Naive thymus-derived CD4-positive, alpha-beta T cell (primary cell): ENCODE measurements at regions of chr19 and their contacts with region 1.

Region 1: DNA sequence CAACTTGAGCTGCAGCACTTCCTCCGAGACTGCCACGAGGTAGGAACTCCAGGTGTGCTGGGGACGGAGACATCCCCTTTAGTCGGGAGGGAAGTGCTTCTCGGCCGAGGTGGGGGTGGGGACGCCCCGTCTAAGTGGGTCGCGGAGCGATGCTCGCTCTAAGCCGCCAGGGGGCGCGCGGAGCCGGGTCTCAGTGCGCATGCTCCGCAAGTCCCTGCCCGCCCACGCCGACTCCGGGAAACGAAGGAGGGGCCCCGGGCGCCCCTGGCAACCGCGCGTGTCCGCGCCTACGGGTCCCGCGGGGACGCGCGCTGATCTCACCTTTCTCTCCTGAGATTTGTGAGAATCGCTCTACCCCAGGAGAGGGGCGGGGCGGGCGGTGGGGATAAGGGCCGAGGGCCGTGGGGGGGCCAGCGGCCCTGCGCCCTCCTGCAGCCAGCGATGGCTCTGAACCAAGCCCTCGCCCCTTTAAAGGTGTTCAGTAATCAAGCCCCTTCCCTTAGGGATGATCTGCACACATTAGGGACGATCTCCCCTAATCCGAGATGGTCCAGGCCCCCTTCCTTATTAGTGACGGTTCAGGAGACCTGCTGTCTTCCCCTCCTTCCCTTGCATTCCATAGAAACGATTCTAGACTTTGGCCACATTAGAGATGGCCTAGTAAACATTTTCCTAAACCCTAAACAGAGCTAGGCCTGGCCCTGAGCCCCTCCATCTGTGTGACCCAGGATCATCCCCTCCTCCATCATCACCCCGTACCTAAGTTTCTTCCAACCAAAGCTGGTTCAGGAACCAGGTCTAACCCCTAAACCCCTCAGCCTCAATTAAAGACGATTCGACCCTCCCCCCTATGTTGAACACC is 47.3 kb upstream of the SHKBP1 start:
- DNase-seq: peak; percentile 84 to 97 (median 89)
- ATAC-seq: peak; percentile 97
- H3K4me3 ChIP-seq: peak overlapping the region; percentile 72
- H3K4me3 Mint-ChIP-seq: peak overlapping the region; percentile 66 to 87 (median 81)
- H3K27ac ChIP-seq: no peak overlapping the region
- H3K27ac Mint-ChIP-seq: peak overlapping the region in 6 of 9 donors; percentile 36 to 90 (median 60)
- H3K4me1 ChIP-seq: peaks cover 9 to 16% of the 10 kb centered on the region in 2 donors
- H3K4me1 Mint-ChIP-seq: peaks cover 5 to 25% (median 12%) of the 10 kb centered on the region in 7 donors
- H3K27me3 ChIP-seq: peaks cover 0 to 3% of the 10 kb centered on the region in 2 donors
- H3K27me3 Mint-ChIP-seq: peaks cover 13 to 37% (median 24%) of the 10 kb centered on the region in 5 donors

Region 2: DNA sequence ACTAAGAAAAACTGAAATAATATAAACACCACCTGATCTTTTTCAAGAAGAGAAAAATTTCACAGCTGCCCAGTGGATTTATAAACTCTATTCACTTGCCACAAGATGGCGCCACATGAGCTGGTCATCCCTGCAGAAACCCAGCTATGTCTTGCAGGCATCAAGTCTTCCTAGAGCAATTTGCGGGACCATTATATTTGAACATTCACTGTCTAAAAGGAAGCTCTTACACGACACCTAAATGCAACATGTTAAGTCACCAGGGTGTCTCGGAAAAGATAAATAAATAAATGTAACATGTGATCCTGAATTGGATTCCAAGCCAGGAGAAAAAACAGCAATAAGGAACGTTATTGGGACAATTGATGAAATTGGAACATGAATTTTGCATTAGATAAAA is 223.9 kb before region 1 on chr19:
- CTCF ChIA-PET with region 1: no interaction called
- POLR2A ChIA-PET with region 1: no interaction called
- intact Hi-C with region 1: loop called in 1 of 2 experiments (anchors 10 kb)
- DNase-seq: peak; percentile 39 to 75 (median 63)
- ATAC-seq: peak; percentile 80
- H3K4me3 ChIP-seq: no peak overlapping the region
- H3K4me3 Mint-ChIP-seq: no peak overlapping the region
- H3K27ac ChIP-seq: no peak overlapping the region
- H3K27ac Mint-ChIP-seq: no peak overlapping the region
- H3K4me1 ChIP-seq: no peaks in the 10 kb centered on the region
- H3K4me1 Mint-ChIP-seq: peaks cover 0 to 5% (median 4%) of the 10 kb centered on the region in 7 donors
- H3K27me3 ChIP-seq: no peaks in the 10 kb centered on the region
- H3K27me3 Mint-ChIP-seq: no peaks in the 10 kb centered on the region

Region 3: DNA sequence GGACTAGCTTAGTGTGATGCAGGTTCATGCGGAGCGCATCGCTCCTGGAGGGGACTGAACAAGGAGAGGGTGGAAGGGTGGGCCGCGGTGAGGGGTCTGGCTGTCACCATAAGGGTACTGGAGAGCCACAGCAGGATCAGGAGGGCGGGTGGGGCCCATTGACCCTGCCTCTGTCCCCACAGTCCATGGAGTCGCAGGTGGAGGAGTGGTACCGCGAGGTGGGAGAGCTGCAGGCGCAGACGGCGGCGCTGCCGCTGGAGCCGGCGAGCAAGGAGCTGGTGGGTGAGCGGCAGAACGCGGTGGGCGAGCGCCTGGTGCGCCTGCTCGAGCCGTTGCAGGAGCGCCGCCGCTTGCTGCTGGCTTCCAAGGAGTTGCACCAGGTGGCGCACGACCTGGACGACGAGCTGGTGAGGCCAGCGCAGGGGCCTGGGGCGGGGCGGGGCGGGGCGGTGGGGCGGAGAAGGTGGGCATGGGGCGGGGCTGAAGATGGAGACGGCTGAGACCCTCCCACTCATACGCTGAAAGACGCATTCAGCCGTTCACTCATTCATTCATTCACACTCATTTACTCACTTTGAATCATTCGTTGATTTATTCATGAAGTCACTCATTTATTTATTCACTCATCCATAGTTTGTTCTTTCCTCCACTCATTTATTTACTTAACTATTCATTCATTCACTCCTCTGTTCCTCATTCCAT is 19.8 kb after region 1 on chr19:
- CTCF ChIA-PET with region 1: interaction called, 3 read pairs
- POLR2A ChIA-PET with region 1: no interaction called
- intact Hi-C with region 1: loop called in 1 of 2 experiments (anchors 2 kb)
- DNase-seq: peak; percentile 26 to 74 (median 57)
- ATAC-seq: peak; percentile 95
- H3K4me3 ChIP-seq: no peak overlapping the region
- H3K4me3 Mint-ChIP-seq: peak overlapping the region in 8 of 10 donors; percentile 13 to 73 (median 54)
- H3K27ac ChIP-seq: no peak overlapping the region
- H3K27ac Mint-ChIP-seq: no peak overlapping the region
- H3K4me1 ChIP-seq: peaks cover 0 to 5% of the 10 kb centered on the region in 2 donors
- H3K4me1 Mint-ChIP-seq: peaks cover 0 to 14% (median 12%) of the 10 kb centered on the region in 7 donors
- H3K27me3 ChIP-seq: peaks cover 0 to 10% of the 10 kb centered on the region in 2 donors
- H3K27me3 Mint-ChIP-seq: peaks cover 38 to 60% (median 52%) of the 10 kb centered on the region in 5 donors

Region 4: DNA sequence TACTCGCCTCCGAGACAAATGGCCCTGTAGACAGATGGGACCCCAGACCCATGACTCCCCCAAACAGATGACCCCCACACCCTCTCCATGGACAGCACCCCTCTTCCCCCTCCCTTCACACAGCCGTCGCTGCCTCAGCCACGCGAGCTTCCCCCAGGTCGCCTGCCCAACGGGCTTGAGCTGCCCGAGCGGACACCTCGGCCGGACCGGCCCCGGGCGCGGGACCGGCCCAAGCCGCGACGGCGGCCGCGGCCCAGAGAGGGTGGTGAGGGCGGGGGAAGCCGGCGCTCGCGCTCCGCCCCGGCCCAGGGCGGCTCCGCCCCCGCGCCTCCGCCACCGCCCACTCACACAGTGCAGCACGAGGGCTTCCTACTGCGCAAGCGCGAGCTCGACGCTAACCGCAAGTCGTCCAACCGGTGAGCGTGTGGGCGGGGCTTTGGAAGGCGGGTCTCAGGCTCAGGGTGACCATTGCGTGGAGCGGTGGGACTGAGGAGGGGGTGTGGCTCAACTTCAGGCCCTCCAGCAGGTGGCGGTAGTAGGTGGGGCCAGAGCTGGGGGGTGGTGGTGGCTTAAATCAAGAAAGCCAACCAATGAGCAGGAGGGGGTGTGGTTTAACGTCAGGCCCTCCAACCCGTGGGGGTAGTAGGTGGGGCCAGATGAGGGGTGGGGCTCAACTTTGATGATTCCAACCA is 41.1 kb after region 1 on chr19:
- CTCF ChIA-PET with region 1: no interaction called
- POLR2A ChIA-PET with region 1: interaction called, 4 read pairs
- intact Hi-C with region 1: loop called in 1 of 2 experiments (anchors 1 kb)
- DNase-seq: peak; percentile 90 to 97 (median 96)
- ATAC-seq: peak; percentile 94
- H3K4me3 ChIP-seq: peak overlapping the region; percentile 45
- H3K4me3 Mint-ChIP-seq: peak overlapping the region; percentile 50 to 85 (median 82)
- H3K27ac ChIP-seq: no peak overlapping the region
- H3K27ac Mint-ChIP-seq: peak overlapping the region; percentile 55 to 93 (median 81)
- H3K4me1 ChIP-seq: peaks cover 9 to 13% of the 10 kb centered on the region in 2 donors
- H3K4me1 Mint-ChIP-seq: peaks cover 10 to 27% (median 19%) of the 10 kb centered on the region in 7 donors
- H3K27me3 ChIP-seq: no peaks in the 10 kb centered on the region
- H3K27me3 Mint-ChIP-seq: peaks cover 9 to 41% (median 17%) of the 10 kb centered on the region in 5 donors

Region 5: DNA sequence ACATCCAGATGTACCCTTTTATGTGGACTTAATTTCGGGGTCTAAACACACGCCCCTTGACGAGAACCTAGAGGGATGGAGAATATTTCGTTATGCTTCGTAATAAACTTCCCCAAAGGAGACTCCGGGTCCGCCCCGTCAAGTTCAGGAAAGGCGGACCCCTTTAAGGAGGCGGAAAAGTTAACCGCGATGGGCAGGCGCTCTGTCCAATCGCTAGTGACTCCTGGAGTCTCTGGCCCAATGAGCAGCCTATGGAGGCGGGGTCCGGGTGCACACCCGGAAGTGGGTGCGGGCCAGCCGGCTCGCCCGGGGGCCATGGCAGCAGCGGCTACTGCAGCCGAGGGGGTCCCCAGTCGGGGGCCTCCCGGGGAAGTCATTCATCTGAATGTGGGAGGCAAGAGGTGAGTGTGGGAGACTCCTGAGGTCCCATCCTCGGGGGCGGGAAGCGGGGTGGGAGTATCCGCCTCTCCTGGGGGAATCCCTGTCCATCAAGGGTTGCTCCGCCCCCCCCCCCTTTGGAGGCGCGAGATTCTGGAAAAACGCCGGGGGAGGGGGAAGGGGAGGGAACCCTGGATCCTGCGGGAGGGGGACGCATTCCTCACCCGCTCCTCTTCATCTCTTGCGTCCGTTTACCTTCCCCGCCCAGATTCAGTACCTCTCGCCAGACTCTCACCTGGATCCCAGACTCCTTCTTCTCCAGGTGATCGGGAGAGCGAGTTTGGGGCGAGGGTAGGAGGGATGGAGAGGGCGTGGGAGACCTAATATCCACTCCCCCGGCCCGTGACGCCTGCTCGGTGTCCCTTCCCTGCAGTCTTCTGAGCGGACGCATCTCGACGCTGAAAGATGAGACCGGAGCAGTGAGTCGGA is 47.5 kb after region 1 on chr19 and contains the start of gene SHKBP1:
- CTCF ChIA-PET with region 1: no interaction called
- POLR2A ChIA-PET with region 1: no interaction called
- intact Hi-C with region 1: loop called in 1 of 2 experiments (anchors 2 kb)
- DNase-seq: peak; percentile 84 to 93 (median 92)
- ATAC-seq: peak; percentile 97
- H3K4me3 ChIP-seq: peak within 1 kb of the TSS; percentile 84
- H3K4me3 Mint-ChIP-seq: peak within 1 kb of the TSS; percentile 80 to 96 (median 90)
- H3K27ac ChIP-seq: peak within 1 kb of the TSS; percentile 77
- H3K27ac Mint-ChIP-seq: peak within 1 kb of the TSS; percentile 79 to 96 (median 87)
- H3K4me1 ChIP-seq: peaks cover 14 to 22% of the 10 kb centered on the region in 2 donors
- H3K4me1 Mint-ChIP-seq: peaks cover 16 to 26% (median 20%) of the 10 kb centered on the region in 7 donors
- H3K27me3 ChIP-seq: no peaks in the 10 kb centered on the region
- H3K27me3 Mint-ChIP-seq: no peaks in the 10 kb centered on the region
- total RNA-seq, gene SHKBP1: 98.4 to 218 (median 139) TPM

Region 6: GRCh38 chr19:40633207-40633606 is 103.9 kb after region 1 on chr19:
- CTCF ChIA-PET with region 1: interaction called, 8 read pairs
- POLR2A ChIA-PET with region 1: no interaction called
- intact Hi-C with region 1: loop called in 1 of 2 experiments (anchors 1 kb)
- DNase-seq: no peak
- ATAC-seq: no peak
- H3K4me3 ChIP-seq: no peak overlapping the region
- H3K4me3 Mint-ChIP-seq: no peak overlapping the region
- H3K27ac ChIP-seq: no peak overlapping the region
- H3K27ac Mint-ChIP-seq: peak overlapping the region in 2 of 9 donors; percentile 11 to 78
- H3K4me1 ChIP-seq: peaks cover 4 to 5% of the 10 kb centered on the region in 2 donors
- H3K4me1 Mint-ChIP-seq: peaks cover 7 to 19% (median 16%) of the 10 kb centered on the region in 7 donors
- H3K27me3 ChIP-seq: no peaks in the 10 kb centered on the region
- H3K27me3 Mint-ChIP-seq: peaks cover 0 to 20% (median 0%) of the 10 kb centered on the region in 5 donors